ENCODE measurements at regions of chr6 and their contacts with region 1.

Region 1: DNA sequence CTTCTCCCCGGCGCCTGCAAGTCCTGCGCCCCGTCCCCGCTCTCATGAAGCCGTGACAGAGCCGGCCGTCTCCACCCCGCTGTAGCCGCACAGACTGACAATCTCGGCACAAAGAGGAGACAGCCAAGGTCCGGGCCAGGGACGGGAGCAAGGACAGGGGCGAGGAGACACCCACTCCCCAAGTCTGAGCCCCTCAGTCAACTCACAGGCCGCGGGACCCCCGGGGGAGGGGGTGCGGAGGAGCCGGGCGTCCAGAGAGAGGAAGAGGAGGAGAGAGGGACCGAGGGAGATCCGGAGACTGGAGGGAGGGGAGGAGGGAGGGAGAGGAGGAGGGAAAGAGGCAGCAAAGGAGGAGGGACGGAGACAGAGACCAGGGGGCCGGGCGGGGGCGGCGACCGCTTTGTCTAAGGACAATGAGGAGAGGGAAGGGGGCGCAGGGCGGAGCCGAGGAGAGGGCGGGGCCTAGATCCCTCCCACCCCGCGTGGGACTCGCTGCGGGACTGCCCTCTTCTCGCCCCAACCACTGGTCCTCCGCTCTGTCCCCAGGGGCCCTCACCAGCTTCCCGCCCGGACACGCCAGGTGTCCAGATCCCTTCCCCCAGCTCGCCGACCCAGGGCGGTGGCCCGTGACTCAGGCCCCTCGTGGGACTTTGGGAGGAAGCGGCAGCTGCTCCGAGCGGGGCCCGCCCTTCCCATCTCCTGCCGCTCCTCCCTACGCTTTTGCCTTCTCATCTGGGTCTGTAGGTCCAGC is 638 bp upstream of the PPP1R18 start:
- DNase-seq: peak; percentile 76
- H3K4me3 ChIP-seq: peak overlapping the region; percentile 66 to 88
- H3K27ac ChIP-seq: peak overlapping the region; percentile 92 to 97
- H3K4me1 ChIP-seq: peaks cover 4% of the 10 kb centered on the region
- H3K27me3 ChIP-seq: no peaks in the 10 kb centered on the region
- CTCF ChIP-seq: no peak
- POLR2A ChIP-seq: peak; percentile 63

Region 2: GRCh38 chr6:30600451-30600961 is 86.6 kb before region 1 on chr6:
- intact Hi-C with region 1: no loop called
- DNase-seq: no peak
- H3K4me3 ChIP-seq: no peak overlapping the region
- H3K27ac ChIP-seq: no peak overlapping the region
- H3K4me1 ChIP-seq: no peaks in the 10 kb centered on the region
- H3K27me3 ChIP-seq: no peaks in the 10 kb centered on the region
- CTCF ChIP-seq: no peak
- POLR2A ChIP-seq: no peak

Region 3: GRCh38 chr6:30616811-30617564 is 70.1 kb before region 1 on chr6 and contains the start of gene PPP1R10:
- intact Hi-C with region 1: loop called (anchors 5 kb)
- DNase-seq: peak; percentile 99
- H3K4me3 ChIP-seq: peak within 1 kb of the TSS; percentile 54 to 89
- H3K27ac ChIP-seq: peak within 1 kb of the TSS; percentile 95 to 99
- H3K4me1 ChIP-seq: peaks cover 5% of the 10 kb centered on the region
- H3K27me3 ChIP-seq: no peaks in the 10 kb centered on the region
- CTCF ChIP-seq: no peak
- POLR2A ChIP-seq: peak; percentile 97
- total RNA-seq, gene PPP1R10: 40.0 to 51.0 TPM

Region 4: DNA sequence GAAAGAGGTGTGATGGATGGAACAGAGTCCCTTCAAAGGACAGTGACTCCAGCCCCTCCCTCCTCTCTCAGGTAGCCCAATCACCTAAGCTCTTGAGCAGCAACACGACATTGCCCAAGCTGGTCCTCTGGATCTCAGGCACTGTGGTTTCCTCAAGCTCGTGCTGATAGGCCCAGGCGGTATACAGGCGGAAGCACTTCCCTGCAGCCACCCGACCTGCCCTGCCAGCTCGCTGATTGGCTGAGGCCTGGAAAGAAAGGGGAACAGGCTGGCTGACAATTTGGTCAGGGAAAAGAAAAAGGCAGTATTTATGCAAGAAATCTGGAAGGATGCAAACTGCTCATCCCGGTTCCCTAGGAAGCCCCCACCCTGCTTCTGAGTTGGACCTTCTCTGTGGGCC is 30.6 kb before region 1 on chr6:
- intact Hi-C with region 1: no loop called
- DNase-seq: no peak
- H3K4me3 ChIP-seq: no peak overlapping the region
- H3K27ac ChIP-seq: no peak overlapping the region
- H3K4me1 ChIP-seq: no peaks in the 10 kb centered on the region
- H3K27me3 ChIP-seq: no peaks in the 10 kb centered on the region
- CTCF ChIP-seq: no peak
- POLR2A ChIP-seq: no peak

Region 5: GRCh38 chr6:31922942-31923341 is 1235.9 kb after region 1 on chr6:
- intact Hi-C with region 1: no loop called
- DNase-seq: no peak
- H3K4me3 ChIP-seq: no peak overlapping the region
- H3K27ac ChIP-seq: no peak overlapping the region
- H3K4me1 ChIP-seq: peaks cover 4% of the 10 kb centered on the region
- H3K27me3 ChIP-seq: no peaks in the 10 kb centered on the region
- CTCF ChIP-seq: no peak
- POLR2A ChIP-seq: no peak